ENCODE measurements at regions of chr1 and their contacts with region 1.

Region 1: GRCh38 chr1:221994274-221994698 is 252.4 kb upstream of the DUSP10 start:
- DNase-seq: peak; percentile 31
- CTCF ChIP-seq: no peak

Region 2: GRCh38 chr1:221845650-221846371 is 148.5 kb before region 1 on chr1:
- CTCF ChIA-PET with region 1: no interaction called
- POLR2A ChIA-PET with region 1: no interaction called
- DNase-seq: no peak
- CTCF ChIP-seq: no peak

Region 3: GRCh38 chr1:221939607-221940006 is 54.7 kb before region 1 on chr1:
- CTCF ChIA-PET with region 1: no interaction called
- POLR2A ChIA-PET with region 1: no interaction called
- DNase-seq: no peak
- CTCF ChIP-seq: no peak

Region 4: DNA sequence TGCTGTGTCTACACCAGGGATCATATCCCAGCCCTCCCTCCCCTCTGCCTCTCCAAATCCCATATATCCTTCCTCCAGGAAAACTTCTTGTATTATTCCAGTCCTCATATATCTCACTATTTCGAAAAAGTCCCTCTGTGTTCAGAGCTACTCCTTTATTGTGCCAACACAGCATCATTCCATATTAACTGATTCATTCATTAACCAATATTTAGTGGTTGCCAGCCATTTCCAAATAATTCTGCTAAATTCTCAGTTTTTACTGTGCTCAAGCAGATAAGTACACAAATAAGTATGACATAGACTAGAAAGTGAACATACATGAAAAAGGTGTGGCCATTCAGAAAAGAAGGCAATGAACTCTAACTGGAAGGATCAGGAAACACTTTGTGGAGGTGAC is 10.8 kb before region 1 on chr1:
- CTCF ChIA-PET with region 1: interaction called, 18 read pairs
- POLR2A ChIA-PET with region 1: no interaction called
- DNase-seq: no peak
- CTCF ChIP-seq: no peak

Region 5: DNA sequence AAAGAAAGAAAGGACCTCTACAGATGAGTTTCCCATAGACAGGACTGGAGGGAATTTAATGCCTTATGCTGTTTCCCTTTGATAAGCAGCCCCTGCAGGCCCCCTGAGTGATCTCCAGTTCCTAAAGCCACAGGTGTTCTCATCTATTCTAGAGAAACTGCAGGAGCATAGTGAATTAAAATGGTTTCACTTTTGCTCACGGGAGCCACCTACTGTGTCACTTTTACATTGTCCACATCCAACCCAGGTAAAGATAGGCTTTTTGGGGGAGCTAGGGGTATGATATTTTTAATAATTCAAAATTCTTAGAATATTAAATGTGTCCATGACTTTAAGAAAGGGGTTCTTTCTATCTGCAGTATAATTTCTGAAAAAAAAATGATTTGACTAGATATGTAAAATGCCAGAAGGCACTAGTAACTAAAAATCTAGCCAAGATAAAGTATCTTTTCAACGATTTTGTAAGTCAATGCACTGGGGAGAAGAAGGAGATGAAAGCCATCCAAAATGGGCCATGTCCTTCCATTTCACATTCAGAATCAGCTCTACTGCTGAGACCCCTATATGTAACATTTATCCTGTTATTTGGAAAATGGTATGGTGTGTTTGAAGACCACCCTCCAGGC is 14.9 kb after region 1 on chr1:
- CTCF ChIA-PET with region 1: interaction called, 12 read pairs
- POLR2A ChIA-PET with region 1: no interaction called
- DNase-seq: peak; percentile 28
- CTCF ChIP-seq: peak; percentile 56

Region 6: GRCh38 chr1:222095606-222096475 is 101.6 kb after region 1 on chr1:
- CTCF ChIA-PET with region 1: no interaction called
- POLR2A ChIA-PET with region 1: no interaction called
- DNase-seq: peak; percentile 65
- CTCF ChIP-seq: peak; percentile 85